H1 (cell line): ENCODE measurements at regions of chr20 and their contacts with region 1.

Region 1: DNA sequence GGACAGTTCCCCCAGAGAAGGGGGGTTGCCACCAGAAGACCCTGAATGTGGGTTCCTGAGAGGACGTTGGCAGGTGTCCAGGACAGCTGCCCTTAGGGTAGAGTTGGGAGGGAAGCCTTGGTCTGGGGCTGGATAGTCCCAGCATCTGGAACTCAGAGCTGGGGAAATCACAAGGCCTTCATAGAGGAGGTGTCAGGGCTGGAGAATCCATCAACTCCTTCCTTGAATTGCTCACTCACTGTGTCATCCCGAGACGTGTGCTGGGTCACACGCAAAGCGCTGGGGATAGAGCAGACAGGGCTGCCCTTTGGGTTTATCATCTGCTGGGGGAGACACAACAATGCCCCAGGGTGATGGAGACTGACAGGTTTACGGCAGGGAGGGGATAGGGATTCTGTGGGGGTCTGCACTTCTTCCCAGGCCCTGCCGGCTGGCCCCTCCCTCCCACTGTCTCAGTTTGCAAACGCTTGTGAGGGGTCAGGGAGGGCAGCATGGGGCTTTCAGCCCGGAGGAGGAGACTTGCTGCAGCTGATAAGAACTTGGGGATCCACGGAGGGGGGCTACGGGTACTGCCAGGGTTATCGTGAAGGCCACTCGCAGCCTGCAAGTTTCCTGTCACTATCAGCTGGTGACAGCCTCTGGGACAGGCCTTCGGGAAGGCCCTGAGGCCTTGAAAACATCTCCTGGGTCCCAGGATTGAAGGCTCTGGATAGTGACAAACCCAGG is 18.6 kb downstream of the RBM38 start:
- DNase-seq: no peak
- H3K4me3 ChIP-seq: no peak overlapping the region
- H3K27ac ChIP-seq: no peak overlapping the region
- H3K4me1 ChIP-seq: no peaks in the 10 kb centered on the region
- H3K27me3 ChIP-seq: no peaks in the 10 kb centered on the region
- CTCF ChIP-seq: no peak
- EP300 ChIP-seq: no peak
- POLR2A ChIP-seq: no peak
- RAD21 ChIP-seq: no peak

Region 2: DNA sequence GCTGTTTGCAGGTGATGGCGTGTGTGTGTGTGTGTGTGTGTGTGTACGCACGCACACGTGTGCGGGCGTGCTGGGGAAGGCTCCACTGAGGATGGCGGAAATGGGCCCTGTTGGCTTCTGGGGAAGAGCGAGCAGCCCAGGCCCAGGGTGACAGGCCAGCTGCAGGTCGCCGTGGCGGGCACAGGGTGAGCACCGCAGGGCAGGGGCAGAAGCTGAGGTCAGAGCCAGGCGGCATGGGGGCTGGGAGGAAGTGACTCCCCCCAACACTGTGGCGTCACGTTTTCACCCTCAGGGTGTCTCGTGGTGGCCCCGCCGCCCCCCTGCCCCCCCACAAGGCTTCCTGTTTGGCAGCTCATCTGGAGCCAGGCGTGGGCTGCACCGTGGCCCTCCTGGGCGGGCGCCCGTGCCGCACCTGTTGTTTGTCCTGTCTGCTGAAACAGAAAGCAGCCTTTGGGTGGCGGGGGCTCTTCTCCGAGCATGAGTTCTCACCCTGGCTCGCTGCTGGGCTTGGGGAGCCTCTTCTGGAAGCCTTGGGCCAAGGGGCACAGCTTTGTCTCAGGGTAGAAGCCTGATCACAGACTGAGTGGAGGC is 11.5 kb before region 1 on chr20:
- CTCF ChIA-PET with region 1: interaction called, 9 read pairs
- POLR2A ChIA-PET with region 1: interaction called, 11 read pairs
- DNase-seq: no peak
- H3K4me3 ChIP-seq: no peak overlapping the region
- H3K27ac ChIP-seq: no peak overlapping the region
- H3K4me1 ChIP-seq: peaks cover 0 to 12% (median 6%) of the 10 kb centered on the region in 4 experiments; a peak in 6 of 7 replicates
- H3K27me3 ChIP-seq: no peaks in the 10 kb centered on the region
- CTCF ChIP-seq: no peak
- EP300 ChIP-seq: no peak
- POLR2A ChIP-seq: no peak
- RAD21 ChIP-seq: no peak

Region 3: GRCh38 chr20:57425150-57426013 is 15.5 kb after region 1 on chr20:
- CTCF ChIA-PET with region 1: interaction called, 18 read pairs
- POLR2A ChIA-PET with region 1: interaction called, 3 read pairs
- DNase-seq: no peak
- H3K4me3 ChIP-seq: no peak overlapping the region
- H3K27ac ChIP-seq: no peak overlapping the region
- H3K4me1 ChIP-seq: peaks cover 0 to 14% (median 10%) of the 10 kb centered on the region in 4 experiments; a peak in 5 of 7 replicates
- H3K27me3 ChIP-seq: no peaks in the 10 kb centered on the region
- CTCF ChIP-seq: no peak
- EP300 ChIP-seq: no peak
- POLR2A ChIP-seq: no peak
- RAD21 ChIP-seq: no peak

Region 4: DNA sequence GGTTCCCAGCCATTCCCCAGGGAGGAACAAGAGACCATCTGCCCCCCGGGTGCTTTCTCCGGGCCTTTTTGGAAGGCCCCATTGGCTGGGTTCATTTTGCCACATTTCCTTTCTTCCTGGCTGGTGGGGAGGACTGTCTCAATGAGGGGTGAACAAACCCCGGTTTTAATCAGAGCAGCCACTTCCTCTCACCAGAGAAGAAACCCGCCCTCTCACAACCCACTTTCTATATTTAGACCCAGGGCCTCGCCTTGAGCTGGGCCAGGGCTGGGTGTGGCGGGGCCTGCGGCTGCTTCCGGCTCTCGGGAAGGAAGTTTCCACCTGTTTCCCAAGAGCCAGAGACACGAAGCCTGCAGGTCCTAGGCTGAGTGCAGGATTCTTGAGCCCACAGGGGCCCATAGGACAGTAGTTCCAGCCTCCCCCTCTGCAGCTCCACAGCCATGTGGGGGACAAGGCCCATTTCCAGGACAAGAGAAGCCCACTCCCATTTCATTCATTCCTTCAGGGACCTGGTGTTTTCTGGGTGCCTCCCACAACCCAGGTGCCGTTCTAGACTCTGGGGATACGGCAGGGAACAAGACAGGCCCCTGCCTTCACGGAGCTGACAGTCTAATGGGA is 23.1 kb after region 1 on chr20:
- CTCF ChIA-PET with region 1: interaction called, 18 read pairs
- POLR2A ChIA-PET with region 1: no interaction called
- DNase-seq: no peak
- H3K4me3 ChIP-seq: no peak overlapping the region
- H3K27ac ChIP-seq: no peak overlapping the region
- H3K4me1 ChIP-seq: peaks cover 0 to 12% (median 10%) of the 10 kb centered on the region in 4 experiments; a peak in 5 of 7 replicates
- H3K27me3 ChIP-seq: no peaks in the 10 kb centered on the region
- CTCF ChIP-seq: no peak
- EP300 ChIP-seq: no peak
- POLR2A ChIP-seq: no peak
- RAD21 ChIP-seq: no peak